HEK293 (cell line): ENCODE measurements at regions of chr15 and their contacts with region 1.

Region 1: DNA sequence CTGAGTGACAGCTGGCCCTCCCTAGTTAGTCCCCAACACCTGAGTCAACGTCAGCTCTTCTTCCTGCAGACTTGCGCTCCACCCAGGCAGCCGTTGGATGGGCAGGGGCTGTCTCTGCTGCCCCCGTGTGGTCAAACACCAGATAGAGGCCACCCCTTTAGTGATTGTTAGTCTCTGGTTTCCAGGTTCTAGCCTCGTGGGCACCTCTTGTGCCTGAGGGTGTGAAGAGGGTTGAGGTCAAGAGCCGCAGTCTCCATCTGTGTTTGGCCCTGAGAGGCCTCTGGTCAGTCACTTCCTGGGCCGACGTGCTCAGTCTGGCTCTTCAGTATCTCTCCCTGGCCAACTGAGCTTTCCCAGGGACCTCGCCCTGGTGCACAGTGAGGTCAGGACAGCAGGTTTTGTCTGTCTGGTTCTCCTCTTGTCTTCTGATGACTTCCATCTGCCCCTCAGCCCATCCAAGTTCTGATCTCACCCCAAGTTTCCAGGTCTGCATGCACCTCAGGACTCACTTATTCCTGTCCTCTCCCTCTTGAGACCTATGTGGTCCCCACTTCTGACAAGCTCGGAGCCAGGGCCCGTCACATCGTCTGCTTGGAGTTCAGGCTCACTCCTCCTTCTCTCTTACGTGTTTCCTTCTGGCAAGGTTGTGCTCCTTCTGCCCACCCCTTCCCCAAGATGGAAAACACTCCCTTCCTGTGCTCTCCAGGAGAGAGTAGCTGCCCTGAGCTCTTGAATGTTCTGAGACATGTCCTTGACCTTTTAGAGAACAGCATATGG is 20.9 kb downstream of the CD276 start:
- H3K4me3 ChIP-seq: no peak overlapping the region
- H3K27ac ChIP-seq: no peak overlapping the region
- H3K4me1 ChIP-seq: no peaks in the 10 kb centered on the region
- CTCF ChIP-seq: peak; percentile 84

Region 2: DNA sequence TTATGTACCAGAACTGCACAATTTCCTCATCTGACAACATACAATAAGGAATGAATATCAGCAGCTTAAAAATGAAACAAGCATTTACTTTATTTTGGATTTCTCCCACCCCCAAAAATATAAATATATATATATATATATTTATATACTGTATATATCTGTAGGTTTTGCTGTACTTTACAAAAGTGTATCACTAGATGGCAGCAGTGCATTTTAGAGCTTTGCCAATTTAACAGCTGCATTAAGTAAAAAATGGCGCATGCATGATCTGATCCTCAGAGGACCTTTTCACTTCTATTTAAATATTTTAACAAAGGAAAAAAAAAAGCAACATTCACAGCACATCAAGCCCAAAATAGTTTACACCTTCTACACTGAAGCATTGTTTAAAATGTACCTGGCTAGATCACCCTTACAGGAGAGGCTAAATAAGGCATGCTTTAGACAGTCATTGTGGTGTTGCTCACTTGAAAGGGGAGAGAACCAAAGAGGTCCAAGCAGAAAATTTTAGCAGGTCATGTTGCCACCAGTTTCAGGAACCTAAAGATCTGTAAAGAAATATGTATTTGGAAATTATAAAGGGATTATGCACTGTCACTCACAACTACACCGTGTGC is 144.4 kb before region 1 on chr15:
- CTCF ChIA-PET with region 1: interaction called, 80 read pairs
- POLR2A ChIA-PET with region 1: interaction called, 3 read pairs
- H3K4me3 ChIP-seq: no peak overlapping the region
- H3K27ac ChIP-seq: no peak overlapping the region
- H3K4me1 ChIP-seq: peaks cover 7% of the 10 kb centered on the region; the same call in 1 of the 2 replicates
- CTCF ChIP-seq: no peak

Region 3: DNA sequence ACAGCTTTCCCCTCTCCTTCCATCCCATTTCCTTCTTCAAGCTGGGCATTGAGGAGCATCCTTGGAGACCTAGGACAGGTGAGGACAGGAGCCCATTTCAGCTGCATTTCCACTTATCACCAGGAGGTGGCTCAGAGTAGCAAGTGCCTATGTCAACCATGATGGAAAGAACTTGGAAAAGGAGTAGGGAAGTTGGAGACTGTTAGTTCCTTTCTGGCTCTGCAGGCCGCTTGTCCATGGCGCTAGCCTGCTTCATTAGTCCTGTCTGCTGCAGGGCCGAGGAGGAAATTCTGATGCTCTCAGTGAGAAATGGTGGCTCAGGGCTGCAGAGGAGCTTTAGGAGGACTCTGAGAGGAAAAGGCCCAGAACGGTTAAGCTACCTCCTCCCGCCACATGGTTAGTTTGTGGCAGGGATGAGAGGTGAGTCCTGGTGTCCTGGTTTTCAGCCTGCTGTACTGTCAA is 27.9 kb before region 1 on chr15:
- CTCF ChIA-PET with region 1: interaction called, 261 read pairs
- POLR2A ChIA-PET with region 1: no interaction called
- H3K4me3 ChIP-seq: no peak overlapping the region
- H3K27ac ChIP-seq: no peak overlapping the region
- H3K4me1 ChIP-seq: no peaks in the 10 kb centered on the region
- CTCF ChIP-seq: no peak

Region 4: DNA sequence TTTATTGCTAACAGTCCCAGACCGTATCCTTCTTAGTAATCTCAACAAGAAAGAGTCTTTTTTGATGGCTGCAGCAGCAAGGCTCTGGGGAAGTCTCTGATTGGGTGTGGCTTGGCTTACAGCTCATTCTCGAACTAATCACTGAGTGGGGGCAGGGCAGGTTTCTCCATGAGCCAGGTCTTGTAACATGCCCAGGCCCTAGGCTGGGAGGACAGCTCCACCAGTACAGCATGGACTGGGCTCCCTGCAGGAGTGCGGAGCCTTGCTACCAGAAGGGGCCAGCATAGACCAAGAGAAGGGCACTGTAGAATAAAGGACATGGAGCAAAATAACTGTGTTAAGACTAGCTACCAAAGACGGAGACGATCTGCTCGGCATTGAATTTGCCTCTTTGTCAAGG is 13.7 kb before region 1 on chr15:
- CTCF ChIA-PET with region 1: interaction called, 261 read pairs
- POLR2A ChIA-PET with region 1: interaction called, 4 read pairs
- H3K4me3 ChIP-seq: no peak overlapping the region
- H3K27ac ChIP-seq: no peak overlapping the region
- H3K4me1 ChIP-seq: peaks cover 17% of the 10 kb centered on the region; the same call in 1 of the 2 replicates
- CTCF ChIP-seq: peak; percentile 88

Region 5: DNA sequence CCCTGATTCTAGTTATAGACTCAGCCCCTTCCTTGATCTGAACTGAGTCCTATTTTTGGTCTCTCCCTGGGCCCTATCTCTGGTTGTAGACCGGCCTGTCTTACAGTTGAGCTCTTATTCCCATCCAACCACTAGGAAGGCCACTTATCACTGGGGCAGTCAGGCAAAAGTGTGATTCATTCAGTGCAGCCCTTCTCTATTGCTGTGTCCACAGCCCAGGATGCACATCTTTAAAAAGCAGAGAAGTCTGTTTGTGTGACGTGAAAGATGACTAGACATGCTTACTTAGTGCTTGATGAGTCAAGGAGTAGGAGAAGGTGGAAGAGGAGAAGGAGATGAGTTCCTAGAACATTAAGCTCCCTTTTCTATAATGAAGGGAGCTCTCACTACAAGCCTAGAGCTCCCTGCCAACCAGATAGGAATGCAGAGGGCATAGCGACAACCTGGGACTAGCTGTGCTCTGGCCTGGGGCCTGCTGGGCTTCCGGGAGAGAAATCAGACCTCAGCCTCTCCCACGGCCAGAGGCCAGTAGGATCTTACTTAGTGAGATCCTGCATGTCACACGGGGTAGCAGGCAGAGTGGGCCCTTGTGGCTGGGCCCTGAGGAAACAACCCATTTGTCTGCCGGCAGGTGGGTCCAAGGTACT is 22.4 kb after region 1 on chr15:
- CTCF ChIA-PET with region 1: interaction called, 35 read pairs
- POLR2A ChIA-PET with region 1: no interaction called
- H3K4me3 ChIP-seq: no peak overlapping the region
- H3K27ac ChIP-seq: no peak overlapping the region
- H3K4me1 ChIP-seq: no peaks in the 10 kb centered on the region
- CTCF ChIP-seq: no peak